ENCODE measurements at regions of chr15 and their contacts with region 1.

Region 1: DNA sequence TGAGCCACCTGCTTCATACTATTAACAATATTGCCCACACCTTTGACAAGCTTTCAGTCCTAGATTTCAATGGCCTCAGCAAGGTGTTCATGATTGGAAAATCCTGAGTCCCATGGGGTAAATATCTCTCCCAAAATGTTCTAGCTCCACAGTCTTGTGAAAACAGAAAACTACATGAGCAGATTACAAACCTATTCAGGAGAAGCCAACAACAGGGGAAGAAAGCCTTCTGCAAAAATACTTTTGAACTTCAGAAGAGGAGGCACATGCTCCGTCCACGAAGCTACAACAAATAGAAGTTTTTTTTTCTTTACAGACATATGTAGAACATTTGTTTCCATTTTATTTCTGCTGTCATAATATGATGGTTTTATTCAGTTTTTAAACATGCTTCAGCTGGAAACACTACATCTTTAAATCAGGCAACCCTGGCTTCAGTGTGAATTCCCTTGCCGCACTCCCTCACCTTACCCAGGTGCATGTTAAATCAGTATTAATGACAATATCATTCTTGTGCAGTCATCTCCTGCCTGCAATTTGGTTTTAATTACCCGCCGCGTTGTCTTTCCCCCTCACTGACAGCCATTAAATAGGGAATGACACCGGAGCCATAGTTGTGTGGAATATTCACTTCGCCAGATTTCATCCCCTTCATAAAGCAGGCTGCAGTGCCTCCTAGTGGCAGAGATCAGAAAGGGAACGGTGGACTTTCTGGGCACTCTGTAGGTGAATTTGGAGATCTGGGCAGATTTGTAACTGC is 725.5 kb upstream of the ARRDC4 start:
- DNase-seq: peak in 5 of 6 donors; percentile 21 to 65 (median 34)
- ATAC-seq: peak; percentile 50 to 92 (median 83)
- H3K4me3 ChIP-seq: no peak overlapping the region
- H3K27ac ChIP-seq: no peak overlapping the region
- H3K4me1 ChIP-seq: no peaks in the 10 kb centered on the region
- H3K27me3 ChIP-seq: no peaks in the 10 kb centered on the region
- CTCF ChIP-seq: peak; percentile 55 to 84 (median 78)

Region 2: DNA sequence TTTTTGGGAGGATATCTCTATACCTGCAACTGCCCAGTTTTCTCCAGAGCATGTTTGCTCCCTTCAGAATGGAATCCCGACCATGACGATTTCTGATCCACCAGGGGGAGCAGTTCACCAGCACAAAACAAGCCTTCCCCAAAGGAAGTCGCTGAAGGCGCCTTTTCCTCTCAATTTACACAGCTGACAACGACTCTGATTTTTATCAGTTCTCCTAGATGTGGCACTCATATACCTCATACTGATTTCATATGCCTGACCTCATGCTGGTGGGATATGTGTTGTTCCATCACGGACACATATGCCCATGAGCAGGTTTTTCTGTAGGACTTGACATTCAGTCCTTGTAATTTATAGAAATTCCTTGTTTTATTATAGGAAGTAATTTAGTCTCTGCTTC is 1975.5 kb before region 1 on chr15:
- intact Hi-C with region 1: loop called in 1 of 3 experiments (anchors 10 kb)
- DNase-seq: peak in 4 of 6 donors; percentile 28 to 67 (median 35)
- ATAC-seq: peak; percentile 48 to 90 (median 84)
- H3K4me3 ChIP-seq: no peak overlapping the region
- H3K27ac ChIP-seq: no peak overlapping the region
- H3K4me1 ChIP-seq: no peaks in the 10 kb centered on the region
- H3K27me3 ChIP-seq: no peaks in the 10 kb centered on the region
- CTCF ChIP-seq: peak; percentile 44 to 76 (median 59)

Region 3: DNA sequence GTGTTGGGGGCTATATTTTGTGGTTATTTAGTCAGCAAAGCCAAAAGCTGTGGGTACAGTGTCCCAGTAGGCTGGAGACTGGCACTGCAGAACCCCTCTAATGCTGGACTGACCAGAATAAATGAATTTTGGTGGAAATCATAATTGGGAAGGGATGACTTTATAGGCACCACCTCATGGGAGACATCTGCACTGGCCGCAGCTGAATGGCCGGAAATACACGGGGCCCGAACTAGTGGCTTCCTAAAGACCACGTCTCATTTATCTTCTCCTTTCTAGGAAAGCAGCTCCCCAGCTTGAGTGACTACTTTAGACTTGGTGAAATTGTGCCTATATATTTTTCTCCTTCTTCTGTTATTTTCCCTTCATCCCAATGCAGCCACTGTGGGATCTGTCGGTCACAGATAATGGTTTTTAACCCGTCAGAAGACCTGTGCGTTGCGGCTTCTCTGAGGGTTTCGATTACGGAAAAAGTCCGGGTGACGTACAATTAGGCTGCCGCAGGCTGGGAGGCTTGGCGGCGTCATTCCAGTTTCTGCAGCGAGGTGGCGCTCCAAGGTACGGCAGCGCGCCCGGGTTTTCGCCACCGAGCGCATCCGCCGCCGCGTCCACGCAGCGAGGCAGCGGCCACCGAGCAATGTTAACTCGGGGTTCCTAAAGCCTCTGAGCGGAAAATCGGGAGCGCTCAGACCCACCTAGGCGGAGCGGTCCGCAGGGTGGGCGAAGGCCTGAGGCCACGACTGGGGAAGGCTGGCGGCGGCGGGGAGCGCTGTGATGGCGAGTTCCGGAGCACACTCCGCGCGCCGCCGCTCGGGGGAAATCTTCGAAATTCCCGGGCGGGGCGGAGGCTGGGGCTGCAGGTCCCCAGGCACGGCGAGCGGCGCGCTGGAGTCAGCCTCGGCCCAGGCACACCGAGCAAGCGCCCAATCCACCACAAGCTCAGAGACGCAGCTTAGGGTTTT is 878.3 kb before region 1 on chr15:
- intact Hi-C with region 1: loop called in 2 of 3 experiments (anchors 10 kb)
- DNase-seq: peak; percentile 67 to 97 (median 82)
- ATAC-seq: peak; percentile 84 to 89 (median 86)
- H3K4me3 ChIP-seq: peak overlapping the region; percentile 37 to 76 (median 60)
- H3K27ac ChIP-seq: peak overlapping the region in 2 of 4 donors; percentile 36 to 57
- H3K4me1 ChIP-seq: no peaks in the 10 kb centered on the region
- H3K27me3 ChIP-seq: peaks cover 0 to 39% (median 3%) of the 10 kb centered on the region in 4 donors
- CTCF ChIP-seq: peak; percentile 89 to 99 (median 97)

Region 4: GRCh38 chr15:97350813-97351212 is 115.8 kb after region 1 on chr15:
- intact Hi-C with region 1: no loop called
- DNase-seq: no peak
- ATAC-seq: no peak
- H3K4me3 ChIP-seq: no peak overlapping the region
- H3K27ac ChIP-seq: no peak overlapping the region
- H3K4me1 ChIP-seq: no peaks in the 10 kb centered on the region
- H3K27me3 ChIP-seq: no peaks in the 10 kb centered on the region
- CTCF ChIP-seq: no peak

Region 5: GRCh38 chr15:97612062-97612461 is 377.0 kb after region 1 on chr15:
- intact Hi-C with region 1: no loop called
- DNase-seq: no peak
- ATAC-seq: no peak
- H3K4me3 ChIP-seq: no peak overlapping the region
- H3K27ac ChIP-seq: no peak overlapping the region
- H3K4me1 ChIP-seq: no peaks in the 10 kb centered on the region
- H3K27me3 ChIP-seq: no peaks in the 10 kb centered on the region
- CTCF ChIP-seq: no peak